ENCODE measurements at regions of chr13 and their contacts with region 1.

Region 1: DNA sequence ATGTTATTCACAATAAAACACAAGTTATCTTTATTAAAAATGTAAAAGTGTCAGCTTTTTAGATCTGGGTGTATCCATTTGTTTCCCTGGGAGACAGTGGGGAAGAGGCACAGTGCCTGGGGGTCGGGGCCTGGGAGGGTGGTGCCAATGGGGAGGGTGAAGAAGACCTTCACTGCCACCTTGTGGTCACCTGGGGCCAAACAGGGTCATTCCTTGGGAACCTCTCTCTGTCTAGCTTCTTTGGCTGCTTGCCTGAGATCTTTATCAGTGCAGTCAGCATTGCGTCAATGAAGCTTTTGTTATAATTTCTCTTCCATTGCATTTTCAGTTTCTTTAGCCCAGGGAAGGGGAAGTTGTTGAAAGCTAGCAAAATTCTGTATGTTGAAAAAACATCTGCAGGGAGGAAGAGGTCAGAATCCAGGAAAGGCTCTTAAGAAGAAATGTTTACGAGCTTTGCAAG is 39.1 kb downstream of the PCDH8 start:
- DNase-seq: peak; percentile 86

Region 2: GRCh38 chr13:52665325-52665724 is 144.0 kb before region 1 on chr13:
- CTCF ChIA-PET with region 1: interaction called, 12 read pairs
- POLR2A ChIA-PET with region 1: no interaction called
- DNase-seq: no peak

Region 3: DNA sequence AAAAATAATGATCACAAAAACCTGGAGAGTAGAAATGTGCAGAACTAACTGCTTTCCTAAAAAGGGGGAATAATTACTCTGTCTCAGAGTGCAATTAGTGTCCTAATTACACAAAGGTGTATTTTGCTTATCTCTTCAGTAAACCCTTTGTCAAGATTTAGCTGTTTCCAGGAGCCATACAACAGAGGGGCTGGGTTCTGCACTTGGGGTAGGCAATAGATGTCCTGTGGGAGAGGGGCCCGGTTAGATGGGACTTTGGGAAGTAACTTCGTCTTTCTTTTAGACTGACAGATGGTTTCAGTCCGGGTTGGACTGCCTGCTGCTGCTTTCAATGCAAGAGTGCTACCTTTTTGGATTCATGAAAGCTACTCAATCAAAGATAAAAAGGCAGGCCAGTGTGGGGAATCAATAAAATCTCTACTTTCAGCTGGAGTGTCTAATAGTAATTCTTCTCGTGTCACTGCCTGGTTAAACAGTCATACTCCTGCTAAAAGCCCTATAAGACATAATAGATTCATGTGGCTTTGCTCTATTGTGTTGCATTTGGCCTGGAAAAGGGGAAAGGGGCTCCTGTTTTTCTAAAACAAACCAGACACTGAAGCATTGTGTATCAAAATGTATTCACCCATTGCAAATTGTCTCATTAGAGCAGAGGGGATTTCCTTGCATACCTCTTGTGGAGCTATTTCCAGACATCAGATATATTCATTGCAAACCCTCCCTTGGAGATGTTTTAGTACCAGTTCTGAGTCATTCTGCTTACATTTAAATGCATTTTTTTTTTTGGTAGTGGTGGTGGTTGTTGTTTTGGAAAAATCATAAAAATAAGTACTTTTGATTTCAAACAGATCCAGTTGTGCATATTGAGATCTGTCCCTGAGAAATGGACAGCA is 122.4 kb after region 1 on chr13:
- CTCF ChIA-PET with region 1: no interaction called
- POLR2A ChIA-PET with region 1: no interaction called
- DNase-seq: no peak

Region 4: DNA sequence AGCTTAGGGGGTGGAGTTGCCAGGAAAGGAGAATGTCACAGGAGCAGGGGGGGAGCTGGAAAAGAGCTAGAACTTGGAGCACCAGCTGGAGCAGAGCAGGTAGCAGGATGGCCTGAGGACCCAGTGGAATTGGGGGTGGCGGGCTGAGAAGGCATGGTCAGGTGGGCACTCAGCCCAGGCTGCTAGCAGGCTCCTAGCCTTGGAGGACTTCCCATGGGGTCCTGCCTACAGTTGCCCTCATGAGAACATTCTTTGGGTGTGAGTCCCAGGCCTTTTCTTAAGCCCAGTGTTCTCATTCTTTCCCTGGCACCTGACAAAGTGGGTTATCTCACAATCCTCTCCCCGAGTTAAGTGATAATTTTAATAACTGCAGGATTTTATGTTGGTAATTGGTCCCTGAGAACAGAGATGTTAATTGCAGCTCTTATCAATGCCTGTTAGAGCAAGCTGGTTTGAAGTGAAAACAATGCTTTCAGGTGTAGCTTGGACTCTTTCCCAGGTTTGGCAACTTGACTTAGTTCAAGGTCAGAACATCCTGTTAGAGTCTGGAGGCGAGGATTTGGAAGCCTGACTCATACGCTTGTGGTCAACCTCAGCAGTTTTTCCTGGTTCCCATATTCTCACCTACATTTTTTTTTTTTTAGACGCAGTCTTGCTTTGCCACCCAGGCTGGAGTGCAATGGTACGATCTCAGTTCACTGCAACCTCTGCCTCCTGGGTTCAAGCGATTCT is 201.2 kb after region 1 on chr13:
- CTCF ChIA-PET with region 1: no interaction called
- POLR2A ChIA-PET with region 1: no interaction called
- DNase-seq: no peak

Measured in HEK293T (cell line).